ENCODE measurements at regions of chr19 and their contacts with region 1.

Region 1: GRCh38 chr19:46821498-46822409 is 28.9 kb downstream of the AP2S1 start:
- DNase-seq: no peak
- H3K4me3 ChIP-seq: no peak overlapping the region
- H3K27ac ChIP-seq: no peak overlapping the region
- H3K4me1 ChIP-seq: no peaks in the 10 kb centered on the region
- H3K27me3 ChIP-seq: no peaks in the 10 kb centered on the region
- CTCF ChIP-seq: no peak
- POLR2A ChIP-seq: no peak

Region 2: DNA sequence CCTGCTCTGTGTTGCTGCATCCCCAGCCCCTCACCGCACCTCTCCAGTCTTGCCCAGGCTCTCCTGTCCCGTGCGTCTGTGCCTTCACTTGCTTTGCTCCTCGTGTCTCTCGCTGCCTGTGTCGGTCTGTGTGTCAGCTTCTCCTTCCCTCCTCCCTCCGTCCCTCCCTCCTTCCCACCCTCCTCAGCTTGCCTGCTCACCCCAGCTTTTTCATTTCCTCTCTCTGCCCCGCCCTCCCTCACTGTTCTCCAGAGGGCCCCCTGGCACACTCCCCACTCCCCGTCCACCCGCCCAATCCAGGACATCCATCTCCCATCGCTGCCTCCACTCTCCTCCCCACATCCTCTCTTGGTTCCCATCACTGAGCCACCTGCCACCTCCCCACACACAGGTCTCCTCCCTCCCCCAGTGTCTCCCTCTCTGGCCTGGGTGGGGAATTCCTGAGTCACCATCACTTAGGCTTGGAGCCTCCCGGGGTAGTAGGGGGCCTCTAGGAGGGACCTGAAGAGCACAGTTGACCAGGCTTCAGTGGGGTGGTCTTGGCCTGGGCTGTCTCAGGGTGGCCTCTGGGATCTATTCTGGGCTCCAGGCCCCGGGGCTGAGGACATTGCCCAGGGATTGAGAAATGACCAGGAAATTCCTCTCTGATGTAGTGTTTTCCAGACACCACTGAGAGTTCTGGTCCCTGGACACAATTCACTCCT is 196.6 kb before region 1 on chr19 and contains the start of gene PTGIR:
- intact Hi-C with region 1: loop called in 1 of 2 experiments (anchors 10 kb)
- DNase-seq: peak in 5 of 7 donors; percentile 50 to 74 (median 59)
- H3K4me3 ChIP-seq: peak within 1 kb of the TSS in 1 of 4 donors; percentile 29
- H3K27ac ChIP-seq: peak within 1 kb of the TSS in 4 of 5 donors; percentile 13 to 82 (median 64)
- H3K4me1 ChIP-seq: peaks cover 13 to 25% of the 10 kb centered on the region in 2 donors
- H3K27me3 ChIP-seq: no peaks in the 10 kb centered on the region
- CTCF ChIP-seq: no peak
- POLR2A ChIP-seq: peak in 1 of 2 donors; percentile 12
- total RNA-seq, gene PTGIR: 0.94 to 24.8 (median 9.0) TPM

Measured in adrenal gland (tissue), 19 donors.